ENCODE measurements at regions of chrX and their contacts with region 1.

Region 1: GRCh38 chrX:48025561-48025960 is 18.8 kb downstream of the SPACA5 start:
- DNase-seq: peak; percentile 20
- H3K4me3 ChIP-seq: no peak overlapping the region
- H3K27ac ChIP-seq: no peak overlapping the region
- H3K27me3 ChIP-seq: no peaks in the 10 kb centered on the region
- CTCF ChIP-seq: peak; percentile 66

Region 2: GRCh38 chrX:47523297-47523696 is 502.3 kb before region 1 on chrX:
- CTCF ChIA-PET with region 1: no interaction called
- POLR2A ChIA-PET with region 1: no interaction called
- DNase-seq: peak; percentile 29
- H3K4me3 ChIP-seq: peak overlapping the region; percentile 59
- H3K27ac ChIP-seq: no peak overlapping the region
- H3K27me3 ChIP-seq: no peaks in the 10 kb centered on the region
- CTCF ChIP-seq: peak; percentile 72

Region 3: GRCh38 chrX:47802589-47802988 is 223.0 kb before region 1 on chrX:
- CTCF ChIA-PET with region 1: no interaction called
- POLR2A ChIA-PET with region 1: no interaction called
- DNase-seq: no peak
- H3K4me3 ChIP-seq: no peak overlapping the region
- H3K27ac ChIP-seq: no peak overlapping the region
- H3K27me3 ChIP-seq: no peaks in the 10 kb centered on the region
- CTCF ChIP-seq: no peak

Region 4: DNA sequence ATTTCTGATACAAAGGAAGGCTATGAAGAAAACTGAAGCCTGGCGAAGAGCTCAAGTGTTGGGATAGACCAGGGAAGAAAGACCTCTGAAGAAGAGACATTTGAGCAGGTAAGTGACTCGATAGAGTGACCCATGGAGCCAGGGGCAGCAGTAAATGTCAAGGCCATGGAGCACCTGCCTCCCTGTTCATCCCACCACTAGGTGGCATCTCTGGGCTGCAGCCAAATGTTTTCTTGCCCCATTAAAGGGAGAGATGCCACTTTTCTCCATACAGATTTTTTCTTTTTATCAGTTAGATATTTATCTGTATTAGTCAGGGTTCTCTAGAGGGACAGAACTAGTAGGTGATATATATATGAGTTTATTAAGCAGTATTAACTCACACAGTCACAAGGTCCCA is 193.8 kb before region 1 on chrX:
- CTCF ChIA-PET with region 1: interaction called, 15 read pairs
- POLR2A ChIA-PET with region 1: no interaction called
- DNase-seq: no peak
- H3K4me3 ChIP-seq: no peak overlapping the region
- H3K27ac ChIP-seq: no peak overlapping the region
- H3K27me3 ChIP-seq: no peaks in the 10 kb centered on the region
- CTCF ChIP-seq: peak; percentile 49

Region 5: GRCh38 chrX:47854474-47854873 is 171.1 kb before region 1 on chrX:
- CTCF ChIA-PET with region 1: interaction called, 26 read pairs
- POLR2A ChIA-PET with region 1: no interaction called
- DNase-seq: no peak
- H3K4me3 ChIP-seq: no peak overlapping the region
- H3K27ac ChIP-seq: no peak overlapping the region
- H3K27me3 ChIP-seq: no peaks in the 10 kb centered on the region
- CTCF ChIP-seq: peak; percentile 49

Region 6: DNA sequence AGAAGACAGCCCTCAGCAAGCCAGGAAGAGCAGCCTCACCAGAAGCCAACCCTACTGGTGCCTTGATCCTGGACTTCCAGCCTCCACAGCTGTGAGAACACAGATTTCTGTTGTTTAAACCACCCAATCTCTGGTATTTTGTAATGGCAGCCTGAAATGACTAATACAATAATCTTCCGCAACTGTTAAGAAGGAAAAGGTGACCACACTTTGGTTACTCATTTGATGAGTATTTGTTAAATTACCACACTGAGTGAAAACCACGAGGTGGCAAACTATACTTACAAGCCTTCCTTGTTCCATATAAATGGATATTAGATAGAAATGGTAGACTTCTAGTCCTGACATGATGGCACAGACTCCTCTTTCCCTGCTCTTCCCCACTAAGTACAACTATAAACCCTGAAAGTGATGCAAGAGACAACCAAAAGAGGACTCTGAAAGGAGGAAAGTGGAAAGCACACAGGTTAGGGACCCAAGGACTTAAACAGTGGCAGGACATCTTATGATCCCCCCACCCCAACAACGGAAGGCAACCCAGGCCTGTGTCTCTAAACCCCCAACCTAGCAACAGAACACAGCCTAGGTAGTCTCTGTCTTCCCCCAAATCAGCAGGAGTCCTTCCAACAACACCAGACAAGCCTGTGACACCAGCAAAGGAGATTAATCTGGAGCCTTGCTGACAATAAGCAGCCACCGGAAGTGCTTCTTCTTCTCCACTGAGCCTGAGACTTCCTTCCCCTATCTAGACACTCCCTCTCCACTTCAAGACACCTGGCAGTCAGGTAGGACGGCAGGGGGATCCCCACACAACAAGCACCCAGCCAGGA is 34.1 kb before region 1 on chrX:
- CTCF ChIA-PET with region 1: no interaction called
- POLR2A ChIA-PET with region 1: no interaction called
- DNase-seq: no peak
- H3K4me3 ChIP-seq: no peak overlapping the region
- H3K27ac ChIP-seq: peak overlapping the region; percentile 52
- H3K27me3 ChIP-seq: no peaks in the 10 kb centered on the region
- CTCF ChIP-seq: no peak